Dorsolateral prefrontal cortex (tissue), 120 donors: ENCODE measurements at regions of chr12 and their contacts with region 1.

Region 1: DNA sequence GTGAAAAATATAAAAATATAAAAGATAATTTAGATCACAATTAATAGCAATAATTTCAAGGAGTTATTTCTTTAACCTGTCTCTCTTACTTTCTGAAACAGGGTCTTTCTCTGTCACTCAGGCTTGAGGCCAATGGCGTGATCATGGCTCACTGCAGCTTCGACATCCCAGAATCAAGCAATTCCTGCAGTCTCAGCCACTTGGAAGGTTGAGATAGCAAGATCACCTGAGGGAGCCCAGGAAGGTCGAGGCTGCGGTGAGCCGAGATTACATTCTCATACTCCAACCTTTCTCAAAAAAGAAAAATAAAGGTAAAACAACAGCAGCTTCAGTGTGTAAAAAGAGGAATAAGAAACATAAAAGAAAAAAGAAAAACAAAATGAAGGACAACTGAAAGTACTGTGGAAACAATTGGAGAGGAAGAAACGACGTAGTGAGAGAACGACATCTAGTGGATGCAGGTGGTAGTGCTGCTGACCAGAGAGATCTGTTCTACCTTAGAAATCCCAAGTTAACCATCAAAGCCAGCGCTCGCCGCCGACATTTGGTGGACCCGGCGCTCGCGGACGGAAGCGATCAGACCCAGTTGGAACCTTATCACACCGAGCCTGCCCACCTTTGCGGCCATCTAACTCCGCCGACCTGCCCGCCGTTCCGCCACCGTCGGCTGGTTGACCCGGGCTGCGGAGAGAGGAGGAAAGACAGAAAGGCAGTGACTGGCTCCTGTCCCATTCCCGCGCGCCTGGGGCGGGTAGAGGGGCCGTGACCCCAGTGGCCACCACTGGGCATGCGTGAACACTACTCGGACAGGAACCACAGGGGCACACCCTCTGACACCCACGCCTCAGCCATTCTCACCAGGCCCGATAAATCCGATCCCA is 196.1 kb downstream of the ALG10 start:
- DNase-seq: peak in 9 of 10 donors; percentile 23 to 78 (median 59)
- H3K4me3 ChIP-seq: peak overlapping the region in 58 of 59 donors; percentile 6 to 70 (median 56)
- H3K27ac ChIP-seq: peak overlapping the region in 7 of 59 donors; percentile 9 to 44 (median 21)
- H3K27me3 ChIP-seq: peaks cover 0 to 18% (median 0%) of the 10 kb centered on the region in 45 donors
- CTCF ChIP-seq: peak; percentile 76 to 98 (median 92)

Region 2: DNA sequence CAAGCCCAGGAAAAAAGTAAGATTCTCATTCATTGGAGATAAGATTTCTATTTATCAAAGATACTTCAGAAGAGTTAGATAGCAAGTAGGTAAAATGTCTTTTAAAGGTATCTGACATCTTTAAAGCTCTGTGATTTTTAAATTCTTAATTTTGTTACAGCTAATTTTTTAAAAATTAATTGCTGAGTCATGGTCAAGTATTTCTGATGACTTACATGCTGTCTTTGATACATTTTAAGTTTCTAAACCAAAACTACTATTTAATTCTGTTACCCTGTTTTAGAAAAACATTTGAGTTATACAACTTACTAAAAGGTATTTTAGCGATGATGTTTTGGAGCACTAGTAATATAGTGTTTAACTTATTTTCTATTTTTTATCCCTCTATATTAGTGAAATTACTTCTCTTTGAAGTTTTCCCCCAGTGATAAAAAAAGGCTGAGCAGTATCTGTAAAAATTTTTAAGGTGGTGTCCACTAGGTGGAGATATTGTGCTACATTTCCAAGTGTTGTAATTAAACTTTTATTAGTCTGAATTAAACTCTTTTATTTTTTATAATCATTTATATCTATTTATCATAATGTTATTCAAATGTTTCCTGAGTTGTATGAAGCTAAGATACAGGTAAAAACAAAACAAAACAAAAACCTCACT is 184.7 kb before region 1 on chr12:
- intact Hi-C with region 1: loop called in 1 of 2 experiments (anchors 10 kb)
- DNase-seq: no peak
- H3K4me3 ChIP-seq: no peak overlapping the region
- H3K27ac ChIP-seq: no peak overlapping the region
- H3K27me3 ChIP-seq: no peaks in the 10 kb centered on the region
- CTCF ChIP-seq: peak; percentile 41 to 76 (median 63)

Region 3: DNA sequence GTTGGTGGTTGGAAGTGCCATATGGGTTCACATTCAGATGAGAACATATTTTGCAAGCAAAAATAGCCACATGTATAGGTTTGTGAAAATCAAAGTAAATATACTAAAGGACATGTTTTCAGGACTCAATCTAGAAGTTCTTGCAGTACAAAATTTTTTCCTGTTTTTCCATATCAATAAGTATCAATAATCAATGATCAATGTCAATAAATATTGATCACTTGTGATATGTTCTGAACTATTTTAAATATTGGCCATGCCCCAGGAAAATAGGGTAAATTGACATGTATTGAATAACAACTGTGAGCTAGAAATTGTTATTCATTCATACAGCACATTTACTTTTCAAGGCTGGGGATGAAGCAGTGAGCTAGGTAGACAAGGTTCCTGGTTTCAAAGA is 171.8 kb before region 1 on chr12:
- intact Hi-C with region 1: no loop called
- DNase-seq: no peak
- H3K4me3 ChIP-seq: no peak overlapping the region
- H3K27ac ChIP-seq: no peak overlapping the region
- H3K27me3 ChIP-seq: no peaks in the 10 kb centered on the region
- CTCF ChIP-seq: no peak

Region 4: DNA sequence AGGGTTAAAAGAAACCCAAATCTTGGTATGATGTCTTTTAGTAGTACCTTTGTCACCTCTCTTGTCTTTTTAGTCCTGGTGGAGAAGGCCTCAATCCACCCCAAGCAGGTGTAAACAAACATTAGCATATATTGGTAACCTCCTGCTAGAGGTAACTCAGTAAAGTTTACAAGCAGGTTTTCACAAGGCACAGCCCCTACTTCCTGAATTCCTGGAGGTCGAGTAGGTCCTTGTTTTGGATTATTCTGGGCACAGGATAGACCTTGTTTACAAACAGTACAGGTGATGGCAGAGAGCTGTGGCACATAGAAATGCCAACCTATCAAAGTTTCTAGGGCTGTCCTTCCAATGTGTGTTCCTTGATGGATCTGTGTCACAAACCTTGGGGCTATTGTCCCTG is 97.0 kb before region 1 on chr12:
- intact Hi-C with region 1: loop called (anchors 5 kb)
- DNase-seq: no peak
- H3K4me3 ChIP-seq: no peak overlapping the region
- H3K27ac ChIP-seq: no peak overlapping the region
- H3K27me3 ChIP-seq: peaks cover 0 to 20% (median 3%) of the 10 kb centered on the region in 45 donors
- CTCF ChIP-seq: no peak